ENCODE measurements at regions of chr14 and their contacts with region 1.

Region 1: DNA sequence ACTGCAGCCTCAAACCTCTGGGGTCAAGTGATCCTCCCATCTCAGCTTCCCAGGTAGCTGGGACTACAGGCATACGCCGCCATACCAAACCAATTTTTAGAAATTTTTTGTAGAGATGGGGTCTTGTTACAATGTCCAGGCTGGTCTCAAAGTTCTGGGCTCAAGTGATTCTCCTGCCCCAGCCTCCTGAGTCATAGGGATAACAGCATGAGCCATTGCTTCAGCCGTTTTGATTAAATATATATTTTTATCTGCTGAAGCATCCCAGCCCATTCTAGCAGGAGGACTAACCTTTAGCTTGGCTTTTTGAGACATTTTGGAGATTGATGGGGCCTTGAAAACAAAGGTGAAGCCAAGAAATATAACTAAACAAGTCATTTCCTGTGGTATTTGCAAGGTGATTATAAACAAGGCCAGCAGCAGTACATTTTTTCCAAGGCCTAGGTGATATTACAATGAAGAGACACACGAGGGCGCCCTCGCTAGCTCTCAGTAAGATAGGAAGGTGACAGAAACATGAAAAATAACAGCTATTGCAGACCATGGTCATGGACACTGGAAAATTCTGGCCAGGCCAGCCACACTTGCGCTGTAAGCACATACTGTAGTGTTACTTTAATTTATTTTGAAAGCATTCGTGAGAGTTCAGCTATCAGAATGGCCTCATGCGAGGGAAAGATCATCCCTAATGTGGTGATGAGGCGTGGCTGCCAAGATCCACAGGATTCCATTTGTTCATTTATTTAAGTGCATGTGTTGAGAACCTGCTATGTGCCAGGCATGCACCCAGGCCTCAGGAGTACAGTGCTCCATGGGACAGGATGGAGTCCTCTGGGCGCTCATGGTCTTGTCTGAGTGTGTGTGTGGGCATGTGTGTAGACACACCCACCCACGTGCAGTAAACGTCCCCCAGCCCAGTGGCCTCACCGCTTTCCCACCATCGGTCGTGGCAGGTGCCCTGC is 63.5 kb downstream of the DGLUCY start:
- DNase-seq: peak; percentile 10 to 51
- H3K4me3 ChIP-seq: no peak overlapping the region
- H3K27ac ChIP-seq: no peak overlapping the region
- H3K4me1 ChIP-seq: no peaks in the 10 kb centered on the region
- H3K27me3 ChIP-seq: no peaks in the 10 kb centered on the region
- CTCF ChIP-seq: peak; percentile 79

Region 2: DNA sequence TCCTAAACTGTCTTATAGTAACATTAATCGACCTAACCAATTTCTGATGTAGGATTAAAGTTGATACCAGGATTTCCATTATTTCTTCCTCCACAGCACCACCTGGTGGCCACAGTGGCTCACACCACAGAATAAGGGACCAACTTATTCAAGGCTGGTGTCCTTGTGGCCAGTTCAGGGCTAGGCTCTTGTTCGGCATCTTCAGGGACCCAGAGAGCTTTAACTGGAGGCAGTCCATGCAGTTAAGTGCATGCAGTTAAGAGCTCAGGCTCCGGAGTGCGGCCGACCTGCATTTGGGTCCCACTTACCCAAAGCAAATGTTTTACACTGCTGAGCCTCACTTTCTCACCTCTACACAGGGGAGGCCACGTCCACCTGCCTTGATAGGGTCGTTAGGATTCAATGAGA is 109.2 kb after region 1 on chr14:
- CTCF ChIA-PET with region 1: interaction called, 6 read pairs
- POLR2A ChIA-PET with region 1: no interaction called
- intact Hi-C with region 1: loop called (anchors 1 kb)
- DNase-seq: peak in 1 of 2 experiments; percentile 26
- H3K4me3 ChIP-seq: no peak overlapping the region
- H3K27ac ChIP-seq: no peak overlapping the region
- H3K4me1 ChIP-seq: no peaks in the 10 kb centered on the region
- H3K27me3 ChIP-seq: no peaks in the 10 kb centered on the region
- CTCF ChIP-seq: peak; percentile 82

Measured in PC-9 (cell line).